ENCODE measurements at regions of chr12 and their contacts with region 1.

Region 1: GRCh38 chr12:112108201-112109079 is at the start of gene NAA25:
- DNase-seq: peak; percentile 92
- ATAC-seq: peak; percentile 86
- H3K4me3 Mint-ChIP-seq: peak within 1 kb of the TSS; percentile 96
- H3K27ac Mint-ChIP-seq: peak within 1 kb of the TSS; percentile 98
- H3K4me1 Mint-ChIP-seq: peaks cover 46% of the 10 kb centered on the region
- H3K27me3 Mint-ChIP-seq: no peaks in the 10 kb centered on the region
- total RNA-seq, gene NAA25: 27.5 to 31.2 TPM

Region 2: GRCh38 chr12:112066566-112066965 is 41.9 kb before region 1 on chr12:
- CTCF ChIA-PET with region 1: no interaction called
- POLR2A ChIA-PET with region 1: no interaction called
- DNase-seq: no peak
- ATAC-seq: no peak
- H3K4me3 Mint-ChIP-seq: no peak overlapping the region
- H3K27ac Mint-ChIP-seq: peak overlapping the region; percentile 7
- H3K4me1 Mint-ChIP-seq: no peaks in the 10 kb centered on the region
- H3K27me3 Mint-ChIP-seq: no peaks in the 10 kb centered on the region

Region 3: GRCh38 chr12:112096667-112097066 is 11.8 kb before region 1 on chr12:
- CTCF ChIA-PET with region 1: interaction called, 26 read pairs
- POLR2A ChIA-PET with region 1: interaction called, 4 read pairs
- DNase-seq: no peak
- ATAC-seq: peak; percentile 19
- H3K4me3 Mint-ChIP-seq: no peak overlapping the region
- H3K27ac Mint-ChIP-seq: peak overlapping the region; percentile 54
- H3K4me1 Mint-ChIP-seq: peaks cover 26% of the 10 kb centered on the region
- H3K27me3 Mint-ChIP-seq: no peaks in the 10 kb centered on the region

Region 4: GRCh38 chr12:112125250-112125999 is 17.0 kb after region 1 on chr12 and contains the start of gene TRAFD1:
- CTCF ChIA-PET with region 1: interaction called, 21 read pairs
- POLR2A ChIA-PET with region 1: interaction called, 146 read pairs
- DNase-seq: peak; percentile 99
- ATAC-seq: peak; percentile 99
- H3K4me3 Mint-ChIP-seq: peak within 1 kb of the TSS; percentile 89
- H3K27ac Mint-ChIP-seq: peak within 1 kb of the TSS; percentile 86
- H3K4me1 Mint-ChIP-seq: peaks cover 39% of the 10 kb centered on the region
- H3K27me3 Mint-ChIP-seq: peaks cover 15% of the 10 kb centered on the region
- total RNA-seq, gene TRAFD1: 54.6 to 55.9 TPM

Region 5: DNA sequence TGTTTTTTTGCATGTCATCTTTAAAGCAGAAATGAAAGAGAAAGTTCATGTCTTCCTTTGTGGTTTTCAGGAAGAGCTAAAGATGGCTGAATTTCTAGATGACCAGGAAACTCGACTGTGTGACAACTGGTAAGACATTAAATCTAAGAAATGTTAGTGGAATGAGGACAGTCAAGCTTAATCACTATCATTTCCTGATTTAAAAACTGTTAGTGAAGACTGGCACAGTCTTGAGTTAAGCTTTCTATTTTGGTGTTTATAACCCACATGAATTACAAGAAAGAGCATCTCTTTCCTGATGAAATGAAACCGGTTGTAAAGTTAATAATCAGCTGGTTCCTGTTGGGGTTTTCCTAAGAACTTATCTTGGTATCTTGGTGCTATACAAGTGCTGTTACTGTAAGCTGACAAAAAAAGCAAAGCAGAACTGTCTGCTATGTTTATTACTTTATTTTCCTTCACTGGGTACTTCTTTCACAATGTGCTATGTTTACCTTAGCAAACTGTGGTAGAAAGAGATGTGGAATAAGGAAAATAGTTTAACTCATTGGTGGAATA is 22.1 kb after region 1 on chr12:
- CTCF ChIA-PET with region 1: interaction called, 21 read pairs
- POLR2A ChIA-PET with region 1: interaction called, 146 read pairs
- DNase-seq: no peak
- ATAC-seq: peak; percentile 61
- H3K4me3 Mint-ChIP-seq: peak overlapping the region; percentile 56
- H3K27ac Mint-ChIP-seq: peak overlapping the region; percentile 87
- H3K4me1 Mint-ChIP-seq: peaks cover 55% of the 10 kb centered on the region
- H3K27me3 Mint-ChIP-seq: no peaks in the 10 kb centered on the region

Region 6: DNA sequence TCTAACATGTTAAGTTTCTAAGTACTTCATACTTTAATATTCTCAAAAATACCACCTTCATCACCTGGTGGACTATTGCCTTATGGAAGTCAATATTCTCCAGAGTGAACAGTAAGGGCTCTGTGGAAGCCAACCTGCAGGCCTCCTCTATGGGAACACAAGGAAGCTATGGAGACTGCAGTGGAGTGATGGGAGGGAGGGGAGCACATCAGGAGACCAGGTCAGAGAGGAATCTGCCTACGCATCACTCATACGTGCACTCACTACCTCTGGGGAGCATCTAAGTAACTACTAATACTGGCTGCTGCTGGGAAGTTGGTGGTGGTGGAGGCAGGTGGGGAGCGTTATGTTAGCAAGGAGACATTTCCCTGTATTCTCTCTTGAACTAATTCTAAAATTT is 253.9 kb after region 1 on chr12:
- CTCF ChIA-PET with region 1: no interaction called
- POLR2A ChIA-PET with region 1: no interaction called
- DNase-seq: no peak
- ATAC-seq: no peak
- H3K4me3 Mint-ChIP-seq: no peak overlapping the region
- H3K27ac Mint-ChIP-seq: no peak overlapping the region
- H3K4me1 Mint-ChIP-seq: no peaks in the 10 kb centered on the region
- H3K27me3 Mint-ChIP-seq: no peaks in the 10 kb centered on the region